OCI-LY7 (cell line): ENCODE measurements at regions of chr6 and their contacts with region 1.

Region 1: GRCh38 chr6:37272834-37273566 is 15.1 kb upstream of the TMEM217 start:
- DNase-seq: no peak
- H3K4me3 ChIP-seq: no peak overlapping the region
- H3K27ac ChIP-seq: no peak overlapping the region
- H3K4me1 ChIP-seq: no peaks in the 10 kb centered on the region
- CTCF ChIP-seq: no peak

Region 2: DNA sequence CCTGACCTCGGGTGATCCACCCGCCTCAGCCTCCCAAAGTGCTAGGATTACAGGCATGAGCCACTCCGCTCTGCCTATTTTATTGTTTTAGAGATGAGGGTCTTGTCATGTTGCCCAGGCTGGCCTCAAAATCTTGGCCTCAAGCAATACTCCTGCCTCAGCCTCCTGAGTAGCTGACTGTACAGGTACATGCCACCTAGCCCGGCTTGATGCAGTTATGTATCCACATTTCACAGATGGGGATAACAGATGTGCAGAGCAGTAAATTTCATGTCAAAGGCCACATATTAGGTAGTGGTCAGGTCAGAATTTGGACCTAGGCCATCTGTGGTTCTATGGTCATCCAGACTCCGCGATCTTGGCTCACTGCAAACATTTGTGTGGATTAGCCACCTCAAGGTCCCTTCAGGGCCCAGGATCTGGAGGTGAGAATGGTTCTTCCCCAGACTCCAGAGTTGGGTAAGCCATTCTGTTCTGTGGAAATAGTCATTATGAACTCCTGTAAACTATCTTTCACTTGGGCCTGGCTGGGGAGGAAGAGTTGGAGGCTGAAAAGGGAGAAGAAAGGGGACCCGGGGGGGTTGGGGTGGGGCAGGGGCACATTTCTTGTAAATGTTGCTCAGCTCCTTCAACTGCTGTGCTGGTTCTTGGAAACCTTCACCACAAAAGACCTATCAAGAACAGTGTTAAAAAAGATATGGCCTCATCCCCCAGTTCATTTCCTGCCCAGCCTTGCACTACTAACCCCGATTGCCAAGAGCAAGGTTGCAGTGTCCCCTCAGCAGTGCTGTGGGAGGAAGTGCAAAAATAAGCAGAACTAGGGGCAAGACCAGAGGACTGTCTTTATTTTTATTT is 90.0 kb before region 1 on chr6:
- CTCF ChIA-PET with region 1: no interaction called
- POLR2A ChIA-PET with region 1: no interaction called
- intact Hi-C with region 1: no loop called
- DNase-seq: peak; percentile 37
- H3K4me3 ChIP-seq: no peak overlapping the region
- H3K27ac ChIP-seq: no peak overlapping the region
- H3K4me1 ChIP-seq: no peaks in the 10 kb centered on the region
- CTCF ChIP-seq: no peak

Region 3: DNA sequence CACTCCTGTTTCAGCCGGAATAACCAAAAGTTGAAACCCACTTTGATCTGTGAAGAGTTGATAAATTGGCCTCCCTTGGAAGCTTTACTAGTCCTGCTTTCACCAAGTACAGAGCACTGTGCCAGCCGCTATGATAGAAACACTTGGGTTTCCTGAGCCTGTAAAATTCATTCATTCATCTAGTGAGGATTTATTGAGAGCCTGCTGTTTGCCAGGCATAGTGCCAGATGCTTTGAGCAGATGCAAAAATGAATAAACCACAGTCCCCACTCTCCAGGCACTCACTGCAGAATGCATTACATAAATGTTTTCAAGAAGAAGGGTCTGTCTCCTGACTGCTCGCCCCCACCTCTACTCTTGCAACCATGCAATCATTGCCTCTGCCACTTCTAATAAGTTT is 10.3 kb after region 1 on chr6:
- CTCF ChIA-PET with region 1: no interaction called
- POLR2A ChIA-PET with region 1: interaction called, 12 read pairs
- intact Hi-C with region 1: no loop called
- DNase-seq: no peak
- H3K4me3 ChIP-seq: no peak overlapping the region
- H3K27ac ChIP-seq: no peak overlapping the region
- H3K4me1 ChIP-seq: no peaks in the 10 kb centered on the region
- CTCF ChIP-seq: no peak

Region 4: DNA sequence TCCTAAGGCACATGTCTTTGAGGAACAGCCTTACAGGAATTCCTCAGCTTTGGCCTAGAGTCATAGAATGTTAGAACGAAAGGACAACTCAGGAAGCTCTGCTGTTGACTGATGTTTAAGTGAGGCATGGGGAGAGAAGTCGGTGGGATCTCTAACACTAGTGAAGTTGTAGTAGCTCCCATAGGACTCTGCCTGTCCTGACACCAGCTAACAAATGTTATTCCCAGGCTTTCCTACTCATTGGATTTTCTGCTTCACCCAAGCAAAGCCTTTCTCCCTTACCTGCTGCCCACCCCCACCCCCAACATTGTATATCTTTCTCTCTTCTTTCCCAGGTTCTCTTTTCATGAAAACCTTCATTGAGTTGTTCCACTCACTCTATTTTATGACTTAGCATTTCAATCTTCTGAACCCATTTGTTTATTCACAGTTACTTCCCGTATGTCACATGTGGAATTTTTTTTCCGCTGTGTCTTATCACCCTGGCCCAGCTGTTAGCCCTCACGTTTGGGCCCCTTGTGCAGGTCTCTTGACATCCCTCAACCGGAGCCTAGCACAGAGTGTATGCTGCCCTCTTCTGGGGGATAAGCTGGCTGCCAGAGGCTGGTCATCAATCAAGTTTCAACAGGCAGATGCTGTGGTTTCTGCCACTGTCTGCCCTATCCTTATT is 41.6 kb after region 1 on chr6:
- CTCF ChIA-PET with region 1: no interaction called
- POLR2A ChIA-PET with region 1: no interaction called
- intact Hi-C with region 1: no loop called
- DNase-seq: peak; percentile 47
- H3K4me3 ChIP-seq: no peak overlapping the region
- H3K27ac ChIP-seq: no peak overlapping the region
- H3K4me1 ChIP-seq: no peaks in the 10 kb centered on the region
- CTCF ChIP-seq: peak; percentile 82

Region 5: GRCh38 chr6:37516076-37516919 is 243.3 kb after region 1 on chr6:
- CTCF ChIA-PET with region 1: no interaction called
- POLR2A ChIA-PET with region 1: no interaction called
- intact Hi-C with region 1: no loop called
- DNase-seq: peak; percentile 59
- H3K4me3 ChIP-seq: no peak overlapping the region
- H3K27ac ChIP-seq: no peak overlapping the region
- H3K4me1 ChIP-seq: peaks cover 13% of the 10 kb centered on the region
- CTCF ChIP-seq: no peak

Region 6: GRCh38 chr6:38755177-38755576 is 1482.2 kb after region 1 on chr6:
- CTCF ChIA-PET with region 1: no interaction called
- POLR2A ChIA-PET with region 1: no interaction called
- intact Hi-C with region 1: no loop called
- DNase-seq: no peak
- H3K4me3 ChIP-seq: no peak overlapping the region
- H3K27ac ChIP-seq: no peak overlapping the region
- H3K4me1 ChIP-seq: no peaks in the 10 kb centered on the region
- CTCF ChIP-seq: no peak